Left ventricle myocardium inferior (tissue), 1 donor: ENCODE measurements at regions of chr1 and their contacts with region 1.

Region 1: GRCh38 chr1:219566951-219567947 is 45.7 kb downstream of the ZC3H11B start:
- DNase-seq: no peak
- H3K4me3 ChIP-seq: no peak overlapping the region
- H3K27ac ChIP-seq: no peak overlapping the region
- H3K4me1 ChIP-seq: peaks cover 9% of the 10 kb centered on the region
- H3K27me3 ChIP-seq: no peaks in the 10 kb centered on the region
- CTCF ChIP-seq: peak; percentile 65

Region 2: GRCh38 chr1:219220945-219221344 is 346.3 kb before region 1 on chr1:
- intact Hi-C with region 1: loop called (anchors 10 kb)
- DNase-seq: no peak
- H3K4me3 ChIP-seq: no peak overlapping the region
- H3K27ac ChIP-seq: no peak overlapping the region
- H3K4me1 ChIP-seq: peaks cover 5% of the 10 kb centered on the region
- H3K27me3 ChIP-seq: no peaks in the 10 kb centered on the region
- CTCF ChIP-seq: peak; percentile 40

Region 3: GRCh38 chr1:219427403-219427802 is 139.8 kb before region 1 on chr1:
- intact Hi-C with region 1: no loop called
- DNase-seq: no peak
- H3K4me3 ChIP-seq: no peak overlapping the region
- H3K27ac ChIP-seq: no peak overlapping the region
- H3K4me1 ChIP-seq: peaks cover under 1% of the 10 kb centered on the region
- H3K27me3 ChIP-seq: no peaks in the 10 kb centered on the region
- CTCF ChIP-seq: no peak

Region 4: GRCh38 chr1:219460896-219461815 is 106.1 kb before region 1 on chr1:
- intact Hi-C with region 1: no loop called
- DNase-seq: no peak
- H3K4me3 ChIP-seq: no peak overlapping the region
- H3K27ac ChIP-seq: peak overlapping the region; percentile 43
- H3K4me1 ChIP-seq: no peaks in the 10 kb centered on the region
- H3K27me3 ChIP-seq: no peaks in the 10 kb centered on the region
- CTCF ChIP-seq: no peak

Region 5: DNA sequence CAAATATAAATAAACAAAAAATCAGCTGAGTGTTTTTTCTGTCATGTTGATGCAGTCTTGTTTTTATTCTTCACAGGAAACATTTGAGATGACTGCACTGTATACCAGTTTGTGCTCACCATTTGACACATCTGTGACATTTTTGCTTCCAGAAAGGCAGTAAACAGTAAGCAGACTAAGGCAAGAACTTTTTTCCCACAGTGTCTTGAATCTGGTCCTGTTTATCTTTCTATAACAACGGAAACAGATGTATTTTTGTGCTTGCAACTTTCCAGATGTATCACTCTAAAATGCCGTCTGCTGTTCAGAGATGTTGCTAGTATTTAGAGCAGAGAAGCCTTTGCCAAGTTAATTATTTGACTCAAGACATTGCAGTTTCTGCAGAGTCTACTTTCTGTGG is 59.8 kb before region 1 on chr1:
- intact Hi-C with region 1: no loop called
- DNase-seq: no peak
- H3K4me3 ChIP-seq: no peak overlapping the region
- H3K27ac ChIP-seq: peak overlapping the region; percentile 19
- H3K4me1 ChIP-seq: no peaks in the 10 kb centered on the region
- H3K27me3 ChIP-seq: no peaks in the 10 kb centered on the region
- CTCF ChIP-seq: no peak

Region 6: DNA sequence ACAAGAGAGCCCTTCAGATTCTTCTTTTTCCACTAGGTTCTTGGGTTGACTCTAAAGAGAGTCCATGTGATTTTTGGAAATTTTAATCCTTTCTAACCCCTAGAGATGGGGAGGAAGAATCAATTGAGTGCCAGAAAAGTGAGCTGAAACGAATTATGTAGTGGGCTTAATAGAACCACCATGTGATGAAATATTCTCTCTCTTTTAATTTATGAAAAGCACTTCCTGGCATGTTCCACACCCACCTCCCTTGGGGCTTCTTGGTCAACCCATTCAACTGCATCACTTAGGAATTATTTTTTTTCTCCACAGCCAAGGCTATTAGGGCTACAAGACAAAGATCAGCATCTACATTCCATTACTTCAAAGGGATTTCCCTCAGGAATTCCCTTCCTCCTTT is 34.0 kb before region 1 on chr1:
- intact Hi-C with region 1: no loop called
- DNase-seq: no peak
- H3K4me3 ChIP-seq: no peak overlapping the region
- H3K27ac ChIP-seq: no peak overlapping the region
- H3K4me1 ChIP-seq: peaks cover 3% of the 10 kb centered on the region
- H3K27me3 ChIP-seq: no peaks in the 10 kb centered on the region
- CTCF ChIP-seq: no peak